ENCODE measurements at regions of chr18 and their contacts with region 1.

Region 1: GRCh38 chr18:47050468-47050867 is 15.0 kb upstream of the ELOA2 start:
- DNase-seq: no peak
- ATAC-seq: peak in 2 of 4 donors; percentile 45 to 54
- H3K4me3 ChIP-seq: no peak overlapping the region
- H3K27ac ChIP-seq: no peak overlapping the region
- H3K4me1 ChIP-seq: peaks cover 4% of the 10 kb centered on the region
- H3K27me3 ChIP-seq: no peaks in the 10 kb centered on the region
- CTCF ChIP-seq: peak; percentile 67

Region 2: DNA sequence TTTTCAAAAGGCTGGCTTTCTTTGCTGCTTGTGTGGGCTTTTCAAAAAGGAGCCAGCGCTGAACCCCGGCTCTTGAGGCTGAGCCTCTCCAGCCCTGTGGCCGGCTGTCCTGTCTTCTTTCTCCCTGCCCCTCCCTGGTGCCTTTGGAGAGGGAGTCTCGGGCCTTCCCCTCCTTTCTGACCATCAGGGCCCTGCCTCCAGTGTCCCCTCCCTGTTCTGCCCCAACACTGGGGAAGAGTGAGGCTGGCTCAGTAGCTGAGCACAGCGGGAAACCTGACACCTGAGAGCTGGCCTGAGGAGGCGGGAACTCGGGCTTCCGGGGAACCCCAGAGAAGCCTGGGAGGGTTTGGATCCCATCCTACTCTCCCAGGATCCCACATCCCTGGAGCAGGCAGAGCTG is 625.6 kb before region 1 on chr18:
- intact Hi-C with region 1: no loop called
- DNase-seq: no peak
- ATAC-seq: peak; percentile 18 to 66 (median 58)
- H3K4me3 ChIP-seq: no peak overlapping the region
- H3K27ac ChIP-seq: no peak overlapping the region
- H3K4me1 ChIP-seq: peaks cover 32% of the 10 kb centered on the region
- H3K27me3 ChIP-seq: no peaks in the 10 kb centered on the region
- CTCF ChIP-seq: no peak

Region 3: GRCh38 chr18:46574000-46574742 is 476.3 kb before region 1 on chr18:
- intact Hi-C with region 1: no loop called
- DNase-seq: no peak
- ATAC-seq: no peak
- H3K4me3 ChIP-seq: no peak overlapping the region
- H3K27ac ChIP-seq: no peak overlapping the region
- H3K4me1 ChIP-seq: no peaks in the 10 kb centered on the region
- H3K27me3 ChIP-seq: no peaks in the 10 kb centered on the region
- CTCF ChIP-seq: no peak

Region 4: GRCh38 chr18:47175908-47176575 is 125.6 kb after region 1 on chr18 and contains the start of gene IER3IP1:
- intact Hi-C with region 1: no loop called
- DNase-seq: peak; percentile 94 to 96
- ATAC-seq: peak; percentile 97 to 99 (median 98)
- H3K4me3 ChIP-seq: peak within 1 kb of the TSS; percentile 97
- H3K27ac ChIP-seq: peak within 1 kb of the TSS; percentile 86
- H3K4me1 ChIP-seq: peaks cover 18% of the 10 kb centered on the region
- H3K27me3 ChIP-seq: no peaks in the 10 kb centered on the region
- CTCF ChIP-seq: peak; percentile 5
- total RNA-seq, gene IER3IP1: 9.3 to 12.6 (median 11.0) TPM

Region 5: GRCh38 chr18:47204908-47205522 is 154.5 kb after region 1 on chr18:
- intact Hi-C with region 1: loop called (anchors 2 kb)
- DNase-seq: no peak
- ATAC-seq: peak in 3 of 4 donors; percentile 54 to 71 (median 55)
- H3K4me3 ChIP-seq: no peak overlapping the region
- H3K27ac ChIP-seq: no peak overlapping the region
- H3K4me1 ChIP-seq: no peaks in the 10 kb centered on the region
- H3K27me3 ChIP-seq: peaks cover 0 to 2% (median 0%) of the 10 kb centered on the region in 3 donors
- CTCF ChIP-seq: peak; percentile 85

Region 6: DNA sequence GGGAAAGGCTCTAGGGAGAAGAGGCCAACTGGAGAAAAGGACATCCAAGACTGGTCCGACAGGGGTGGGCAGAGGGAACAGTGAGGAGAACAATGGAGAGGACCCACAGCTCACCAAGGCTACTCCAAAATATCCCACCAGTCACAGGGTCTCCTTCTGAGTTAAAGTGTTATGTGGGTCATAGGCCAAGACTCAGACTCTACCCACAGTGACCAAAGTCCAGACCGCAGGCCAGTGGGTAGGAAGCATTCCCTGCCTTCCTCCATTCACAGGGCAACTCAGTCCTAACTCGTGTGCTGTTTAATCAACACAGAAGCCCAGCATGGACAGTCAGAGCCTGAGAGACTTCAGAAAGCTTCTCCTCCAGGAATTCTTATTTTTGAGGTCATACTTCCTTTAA is 619.3 kb after region 1 on chr18:
- intact Hi-C with region 1: no loop called
- DNase-seq: no peak
- ATAC-seq: no peak
- H3K4me3 ChIP-seq: no peak overlapping the region
- H3K27ac ChIP-seq: no peak overlapping the region
- H3K4me1 ChIP-seq: no peaks in the 10 kb centered on the region
- H3K27me3 ChIP-seq: peaks cover 0 to 13% (median 3%) of the 10 kb centered on the region in 3 donors
- CTCF ChIP-seq: no peak

Region 7: DNA sequence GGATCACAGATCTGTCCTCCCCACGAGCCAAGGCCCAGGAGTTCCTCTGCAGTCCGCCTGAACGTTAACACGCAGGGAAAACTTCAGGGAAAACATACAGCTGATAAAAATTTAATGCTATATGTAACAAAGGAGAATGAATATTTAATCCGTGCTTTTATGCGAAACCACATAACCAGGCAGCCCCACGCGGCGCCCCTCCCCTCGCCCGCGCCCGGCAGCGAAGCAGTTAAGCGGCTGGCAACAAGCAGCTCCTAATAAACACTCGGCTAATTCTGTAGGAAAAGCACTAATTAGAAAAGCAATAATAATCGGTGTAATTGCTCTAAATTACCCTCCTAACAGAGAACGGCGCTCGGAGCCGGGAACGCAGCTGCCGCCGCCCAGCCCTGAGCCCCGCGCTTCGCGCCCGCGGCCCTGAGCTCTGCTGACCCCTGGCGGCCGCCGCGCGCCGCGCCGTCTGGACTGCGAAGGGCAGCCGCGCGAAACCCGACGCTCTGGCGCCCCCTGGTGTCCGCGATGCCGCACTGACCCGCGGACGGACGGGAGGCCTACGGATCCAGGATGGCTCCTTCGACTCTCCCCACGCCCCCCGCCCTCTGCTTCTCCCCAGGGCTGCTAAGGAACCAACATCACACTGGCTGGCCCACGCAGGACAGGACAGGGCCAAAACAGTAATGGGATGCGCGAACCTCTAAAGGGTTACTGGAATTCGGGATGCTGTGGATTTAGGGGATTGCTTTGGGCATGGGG is 698.6 kb after region 1 on chr18:
- intact Hi-C with region 1: loop called (anchors 5 kb)
- DNase-seq: peak; percentile 81 to 88
- ATAC-seq: peak; percentile 97 to 99 (median 98)
- H3K4me3 ChIP-seq: peak overlapping the region; percentile 54
- H3K27ac ChIP-seq: no peak overlapping the region
- H3K4me1 ChIP-seq: no peaks in the 10 kb centered on the region
- H3K27me3 ChIP-seq: peaks cover 0 to under 1% (median 0%) of the 10 kb centered on the region in 3 donors
- CTCF ChIP-seq: peak; percentile 100

Region 8: DNA sequence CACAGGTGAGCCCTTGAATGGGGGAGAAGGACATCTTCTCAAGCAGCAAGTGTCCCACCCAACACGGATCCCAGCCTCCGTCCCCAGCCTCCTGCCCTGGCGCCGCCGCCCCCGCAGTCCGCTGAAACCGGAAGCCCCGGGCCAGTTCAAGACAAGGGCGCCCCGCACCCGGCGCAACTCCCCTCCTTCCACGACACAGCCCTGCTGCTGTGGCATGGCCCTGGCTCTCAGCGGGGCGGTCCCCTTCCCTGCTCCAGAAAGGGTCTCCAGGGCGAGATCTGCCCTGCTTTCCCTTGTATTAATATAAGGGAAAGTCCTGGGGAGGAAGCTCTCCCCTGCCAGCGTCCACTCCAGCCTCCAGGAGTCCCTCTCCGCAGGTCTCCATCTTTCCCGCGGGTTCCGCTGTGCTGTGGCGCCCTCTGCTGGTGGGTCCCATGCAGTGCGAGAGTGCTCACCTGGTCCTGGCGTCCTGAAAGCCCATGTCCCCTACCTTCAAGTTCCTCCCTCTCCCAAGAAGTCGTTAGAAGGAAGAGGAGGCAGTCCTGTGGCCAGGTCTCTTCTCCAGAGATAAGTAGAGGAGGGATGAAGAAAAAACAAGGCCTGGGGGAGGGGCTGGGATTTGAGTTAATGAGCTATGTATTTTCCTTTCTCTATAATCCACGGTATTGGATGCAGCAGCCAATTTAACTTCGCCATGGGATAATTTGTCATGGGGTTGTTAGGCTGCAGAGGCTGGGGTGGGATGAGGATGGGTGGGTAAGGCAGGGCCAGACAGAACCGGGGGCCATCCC is 704.0 kb after region 1 on chr18:
- intact Hi-C with region 1: loop called (anchors 5 kb)
- DNase-seq: no peak
- ATAC-seq: peak in 1 of 4 donors; percentile 42
- H3K4me3 ChIP-seq: no peak overlapping the region
- H3K27ac ChIP-seq: no peak overlapping the region
- H3K4me1 ChIP-seq: no peaks in the 10 kb centered on the region
- H3K27me3 ChIP-seq: peaks cover 0 to 13% (median 2%) of the 10 kb centered on the region in 3 donors
- CTCF ChIP-seq: peak; percentile 38